CD8-positive, alpha-beta T cell (primary cell): ENCODE measurements at regions of chr2 and their contacts with region 1.

Region 1: DNA sequence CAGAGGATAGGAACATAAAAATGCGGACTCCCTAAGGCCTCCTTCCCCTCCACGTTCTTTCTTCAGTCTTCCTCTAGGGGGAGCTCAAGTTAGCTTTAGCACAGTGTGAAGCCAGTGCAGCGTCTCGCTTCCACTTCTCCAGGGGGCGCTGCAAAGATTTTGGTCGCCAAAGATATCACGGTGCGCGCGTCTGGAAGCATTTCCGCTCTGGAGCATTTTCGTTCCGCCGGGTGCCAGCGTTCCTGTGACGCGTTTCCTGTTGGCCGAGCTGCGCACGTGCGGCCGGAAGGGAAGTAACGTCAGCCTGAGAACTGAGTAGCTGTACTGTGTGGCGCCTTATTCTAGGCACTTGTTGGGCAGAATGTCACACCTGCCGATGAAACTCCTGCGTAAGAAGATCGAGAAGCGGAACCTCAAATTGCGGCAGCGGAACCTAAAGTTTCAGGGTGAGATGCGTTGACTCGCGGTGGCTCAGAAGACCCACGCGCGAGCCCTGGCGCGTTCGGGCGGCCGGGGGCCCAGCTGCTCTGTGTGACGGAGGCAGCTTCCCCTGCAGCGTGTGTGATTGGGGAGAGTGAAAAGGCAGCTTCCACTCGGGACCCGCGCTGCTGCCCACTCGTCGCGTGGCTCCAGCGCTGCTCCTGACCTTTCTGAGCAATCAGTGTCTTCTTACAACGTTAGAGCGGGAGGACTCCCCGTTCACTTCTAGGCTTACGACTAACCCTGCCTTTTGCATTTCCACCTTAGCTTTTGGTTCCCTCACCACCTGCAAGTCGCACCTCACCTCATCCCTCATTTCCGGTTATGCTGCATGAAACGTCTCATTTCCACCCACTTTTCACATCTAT is at the start of gene DDX18:
- DNase-seq: peak; percentile 95 to 100 (median 97)
- ATAC-seq: peak; percentile 84
- H3K4me3 ChIP-seq: peak within 1 kb of the TSS; percentile 58 to 77
- H3K4me3 Mint-ChIP-seq: peak within 1 kb of the TSS; percentile 88
- H3K27ac ChIP-seq: peak within 1 kb of the TSS; percentile 90 to 97
- H3K27ac Mint-ChIP-seq: peak within 1 kb of the TSS; percentile 98
- H3K4me1 ChIP-seq: peaks cover 30% of the 10 kb centered on the region
- H3K4me1 Mint-ChIP-seq: peaks cover 40% of the 10 kb centered on the region
- H3K27me3 ChIP-seq: no peaks in the 10 kb centered on the region
- H3K27me3 Mint-ChIP-seq: no peaks in the 10 kb centered on the region
- CTCF ChIP-seq: peak; percentile 98
- total RNA-seq, gene DDX18: 124 to 129 TPM

Region 2: DNA sequence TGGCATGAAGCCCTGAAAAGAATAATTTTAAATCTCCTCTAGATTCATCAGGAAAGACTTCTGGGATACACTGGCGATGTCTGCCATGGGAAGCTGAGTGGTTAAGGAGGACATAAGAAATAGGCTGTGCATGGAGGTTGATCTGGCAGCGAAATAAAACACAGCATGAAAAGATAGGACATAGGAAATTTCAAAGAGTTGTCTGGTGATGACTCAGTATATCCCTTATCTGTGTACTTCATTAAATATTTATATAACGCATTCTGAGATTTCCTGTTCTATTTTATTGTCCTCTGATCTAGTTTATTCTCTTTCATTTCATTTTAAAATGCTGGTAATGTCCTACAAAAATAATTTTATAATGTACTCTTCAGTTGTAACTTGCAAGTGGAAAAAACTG is 1337.4 kb before region 1 on chr2:
- CTCF ChIA-PET with region 1: no interaction called
- POLR2A ChIA-PET with region 1: no interaction called
- intact Hi-C with region 1: no loop called
- DNase-seq: no peak
- ATAC-seq: no peak
- H3K4me3 ChIP-seq: no peak overlapping the region
- H3K4me3 Mint-ChIP-seq: no peak overlapping the region
- H3K27ac ChIP-seq: no peak overlapping the region
- H3K27ac Mint-ChIP-seq: no peak overlapping the region
- H3K4me1 ChIP-seq: no peaks in the 10 kb centered on the region
- H3K4me1 Mint-ChIP-seq: no peaks in the 10 kb centered on the region
- H3K27me3 ChIP-seq: no peaks in the 10 kb centered on the region
- H3K27me3 Mint-ChIP-seq: no peaks in the 10 kb centered on the region
- CTCF ChIP-seq: no peak

Region 3: GRCh38 chr2:117801826-117802225 is 12.8 kb before region 1 on chr2:
- CTCF ChIA-PET with region 1: interaction called, 11 read pairs
- POLR2A ChIA-PET with region 1: interaction called, 5 read pairs
- intact Hi-C with region 1: no loop called
- DNase-seq: no peak
- ATAC-seq: no peak
- H3K4me3 ChIP-seq: no peak overlapping the region
- H3K4me3 Mint-ChIP-seq: no peak overlapping the region
- H3K27ac ChIP-seq: no peak overlapping the region
- H3K27ac Mint-ChIP-seq: no peak overlapping the region
- H3K4me1 ChIP-seq: no peaks in the 10 kb centered on the region
- H3K4me1 Mint-ChIP-seq: peaks cover 4% of the 10 kb centered on the region
- H3K27me3 ChIP-seq: no peaks in the 10 kb centered on the region
- H3K27me3 Mint-ChIP-seq: peaks cover 31% of the 10 kb centered on the region
- CTCF ChIP-seq: no peak

Region 4: GRCh38 chr2:118003396-118003824 is 188.8 kb after region 1 on chr2:
- CTCF ChIA-PET with region 1: interaction called, 22 read pairs
- POLR2A ChIA-PET with region 1: interaction called, 6 read pairs
- intact Hi-C with region 1: loop called (anchors 2 kb)
- DNase-seq: peak; percentile 5 to 86 (median 47)
- ATAC-seq: peak; percentile 97
- H3K4me3 ChIP-seq: no peak overlapping the region
- H3K4me3 Mint-ChIP-seq: no peak overlapping the region
- H3K27ac ChIP-seq: no peak overlapping the region
- H3K27ac Mint-ChIP-seq: peak overlapping the region; percentile 78
- H3K4me1 ChIP-seq: no peaks in the 10 kb centered on the region
- H3K4me1 Mint-ChIP-seq: peaks cover 6% of the 10 kb centered on the region
- H3K27me3 ChIP-seq: no peaks in the 10 kb centered on the region
- H3K27me3 Mint-ChIP-seq: no peaks in the 10 kb centered on the region
- CTCF ChIP-seq: peak; percentile 76

Region 5: GRCh38 chr2:118088051-118089024 is 273.7 kb after region 1 on chr2 and contains the start of gene INSIG2:
- CTCF ChIA-PET with region 1: no interaction called
- POLR2A ChIA-PET with region 1: interaction called, 3 read pairs
- intact Hi-C with region 1: loop called (anchors 1 to 5 kb)
- DNase-seq: peak; percentile 79 to 95 (median 86)
- ATAC-seq: peak; percentile 88
- H3K4me3 ChIP-seq: peak within 1 kb of the TSS; percentile 70 to 98
- H3K4me3 Mint-ChIP-seq: peak within 1 kb of the TSS; percentile 92
- H3K27ac ChIP-seq: peak within 1 kb of the TSS; percentile 80
- H3K27ac Mint-ChIP-seq: peak within 1 kb of the TSS; percentile 95
- H3K4me1 ChIP-seq: peaks cover 16% of the 10 kb centered on the region
- H3K4me1 Mint-ChIP-seq: peaks cover 34% of the 10 kb centered on the region
- H3K27me3 ChIP-seq: no peaks in the 10 kb centered on the region
- H3K27me3 Mint-ChIP-seq: peaks cover 4% of the 10 kb centered on the region
- CTCF ChIP-seq: no peak
- total RNA-seq, gene INSIG2: 10.9 to 11.8 TPM

Region 6: DNA sequence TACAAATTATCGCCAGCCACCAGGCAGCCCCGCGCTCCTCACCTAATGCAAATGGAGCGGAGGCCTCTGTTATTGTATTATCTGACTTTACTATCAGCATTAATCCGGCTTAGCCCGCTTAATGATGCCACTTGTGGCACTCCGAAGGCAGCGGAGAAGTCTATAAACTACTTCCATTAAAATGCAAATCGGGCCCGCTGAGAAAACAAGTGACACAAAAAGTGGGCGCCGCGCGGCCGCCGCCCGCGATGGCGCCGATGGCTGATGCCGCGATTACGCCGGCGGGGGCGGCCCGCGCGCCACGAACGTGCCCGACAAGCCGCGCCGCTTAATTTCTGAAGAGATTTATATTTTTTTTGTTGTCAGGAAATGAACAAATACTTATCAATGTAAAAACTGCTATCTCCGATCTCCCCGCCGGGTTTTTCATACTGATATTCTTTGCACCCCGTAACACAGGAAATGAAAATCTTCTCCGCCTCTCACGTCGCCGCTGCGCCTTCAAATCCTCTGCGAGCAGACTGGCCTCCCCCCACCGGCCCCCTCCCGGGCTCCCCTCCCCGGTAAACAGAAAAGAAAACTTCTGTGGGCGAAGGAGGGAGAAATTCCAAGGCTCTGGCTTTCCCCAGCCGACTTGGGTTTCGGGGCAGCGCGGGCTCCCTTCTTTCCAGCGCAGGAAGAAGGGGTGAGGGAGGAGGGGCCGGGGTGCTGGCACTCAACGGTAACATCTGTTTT is 495.5 kb after region 1 on chr2:
- CTCF ChIA-PET with region 1: no interaction called
- POLR2A ChIA-PET with region 1: no interaction called
- intact Hi-C with region 1: loop called in 1 of 2 experiments (anchors 5 kb)
- DNase-seq: peak; percentile 22 to 77 (median 56)
- ATAC-seq: peak; percentile 75
- H3K4me3 ChIP-seq: peak overlapping the region; percentile 66 to 69
- H3K4me3 Mint-ChIP-seq: peak overlapping the region; percentile 88
- H3K27ac ChIP-seq: peak overlapping the region; percentile 81 to 88
- H3K27ac Mint-ChIP-seq: peak overlapping the region; percentile 97
- H3K4me1 ChIP-seq: peaks cover 8% of the 10 kb centered on the region
- H3K4me1 Mint-ChIP-seq: peaks cover 5% of the 10 kb centered on the region
- H3K27me3 ChIP-seq: no peaks in the 10 kb centered on the region
- H3K27me3 Mint-ChIP-seq: peaks cover 4% of the 10 kb centered on the region
- CTCF ChIP-seq: no peak

Region 7: DNA sequence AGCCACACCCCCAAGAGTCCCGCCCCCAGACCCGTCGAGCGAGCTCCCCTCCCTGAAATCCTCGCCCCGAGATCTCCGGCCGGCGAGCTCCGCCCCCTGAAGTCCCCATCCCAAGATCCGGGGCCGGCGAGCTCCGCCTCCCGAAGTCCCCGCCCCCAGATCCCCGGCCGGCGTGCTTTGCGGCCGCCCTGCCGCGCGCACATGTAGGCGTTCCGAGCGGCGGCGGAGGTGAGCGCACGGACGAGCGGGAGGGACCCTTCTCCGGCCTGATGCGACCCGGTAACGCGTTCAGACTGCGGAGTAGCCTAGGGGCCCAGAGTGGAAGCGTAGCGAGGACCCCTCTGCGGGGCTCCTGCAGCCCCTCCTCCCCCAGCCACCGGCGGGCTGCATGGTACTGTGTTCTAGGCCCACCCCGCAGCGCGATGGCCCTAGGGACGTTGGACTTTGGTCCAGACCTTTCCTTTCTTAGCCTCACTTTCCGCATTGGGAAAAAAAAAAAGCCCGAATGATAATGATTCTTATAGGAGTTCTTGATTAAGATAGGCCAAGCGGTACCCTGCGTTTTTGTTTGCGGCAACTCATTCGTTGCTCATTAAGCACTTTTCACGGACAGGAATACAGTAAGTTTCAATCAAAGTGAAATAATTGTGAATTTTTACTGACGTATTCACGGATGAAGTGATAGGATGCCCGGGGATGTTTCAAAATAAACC is 1864.5 kb after region 1 on chr2 and contains the start of gene TMEM177:
- CTCF ChIA-PET with region 1: no interaction called
- POLR2A ChIA-PET with region 1: no interaction called
- intact Hi-C with region 1: loop called (anchors 5 to 10 kb)
- DNase-seq: peak; percentile 77 to 93 (median 87)
- ATAC-seq: peak; percentile 86
- H3K4me3 ChIP-seq: peak within 1 kb of the TSS; percentile 71 to 90
- H3K4me3 Mint-ChIP-seq: peak within 1 kb of the TSS; percentile 89
- H3K27ac ChIP-seq: peak within 1 kb of the TSS; percentile 59 to 69
- H3K27ac Mint-ChIP-seq: peak within 1 kb of the TSS; percentile 92
- H3K4me1 ChIP-seq: peaks cover 18% of the 10 kb centered on the region
- H3K4me1 Mint-ChIP-seq: peaks cover 27% of the 10 kb centered on the region
- H3K27me3 ChIP-seq: no peaks in the 10 kb centered on the region
- H3K27me3 Mint-ChIP-seq: no peaks in the 10 kb centered on the region
- CTCF ChIP-seq: no peak
- total RNA-seq, gene TMEM177: 2.1 to 3.8 TPM